Activated CD4-positive, alpha-beta memory T cell treated with anti-CD3 and anti-CD28 coated beads, Interleukin-2, amount 10 ng/mL, durations not matched to agents 7 days and 5 days (primary cell): ENCODE measurements at regions of chr7 and their contacts with region 1.

Region 1: GRCh38 chr7:23055582-23056178 is 41.8 kb upstream of the HYCC1 start:
- DNase-seq: peak; percentile 67
- H3K4me3 Mint-ChIP-seq: no peak overlapping the region
- H3K27ac Mint-ChIP-seq: no peak overlapping the region
- H3K4me1 Mint-ChIP-seq: peaks cover 14% of the 10 kb centered on the region
- H3K27me3 Mint-ChIP-seq: no peaks in the 10 kb centered on the region

Region 2: GRCh38 chr7:22726345-22727185 is 329.1 kb before region 1 on chr7:
- CTCF ChIA-PET with region 1: interaction called, 18 read pairs
- POLR2A ChIA-PET with region 1: no interaction called
- DNase-seq: peak; percentile 70
- H3K4me3 Mint-ChIP-seq: peak overlapping the region; percentile 61
- H3K27ac Mint-ChIP-seq: peak overlapping the region; percentile 66
- H3K4me1 Mint-ChIP-seq: peaks cover 44% of the 10 kb centered on the region
- H3K27me3 Mint-ChIP-seq: peaks cover 30% of the 10 kb centered on the region

Region 3: GRCh38 chr7:22854158-22855048 is 201.3 kb before region 1 on chr7:
- CTCF ChIA-PET with region 1: interaction called, 21 read pairs
- POLR2A ChIA-PET with region 1: no interaction called
- DNase-seq: peak; percentile 80
- H3K4me3 Mint-ChIP-seq: peak overlapping the region; percentile 92
- H3K27ac Mint-ChIP-seq: peak overlapping the region; percentile 86
- H3K4me1 Mint-ChIP-seq: peaks cover 38% of the 10 kb centered on the region
- H3K27me3 Mint-ChIP-seq: peaks cover 3% of the 10 kb centered on the region

Region 4: GRCh38 chr7:22944022-22944421 is 111.7 kb before region 1 on chr7:
- CTCF ChIA-PET with region 1: interaction called, 12 read pairs
- POLR2A ChIA-PET with region 1: interaction called, 3 read pairs
- DNase-seq: no peak
- H3K4me3 Mint-ChIP-seq: no peak overlapping the region
- H3K27ac Mint-ChIP-seq: no peak overlapping the region
- H3K4me1 Mint-ChIP-seq: no peaks in the 10 kb centered on the region
- H3K27me3 Mint-ChIP-seq: no peaks in the 10 kb centered on the region

Region 5: DNA sequence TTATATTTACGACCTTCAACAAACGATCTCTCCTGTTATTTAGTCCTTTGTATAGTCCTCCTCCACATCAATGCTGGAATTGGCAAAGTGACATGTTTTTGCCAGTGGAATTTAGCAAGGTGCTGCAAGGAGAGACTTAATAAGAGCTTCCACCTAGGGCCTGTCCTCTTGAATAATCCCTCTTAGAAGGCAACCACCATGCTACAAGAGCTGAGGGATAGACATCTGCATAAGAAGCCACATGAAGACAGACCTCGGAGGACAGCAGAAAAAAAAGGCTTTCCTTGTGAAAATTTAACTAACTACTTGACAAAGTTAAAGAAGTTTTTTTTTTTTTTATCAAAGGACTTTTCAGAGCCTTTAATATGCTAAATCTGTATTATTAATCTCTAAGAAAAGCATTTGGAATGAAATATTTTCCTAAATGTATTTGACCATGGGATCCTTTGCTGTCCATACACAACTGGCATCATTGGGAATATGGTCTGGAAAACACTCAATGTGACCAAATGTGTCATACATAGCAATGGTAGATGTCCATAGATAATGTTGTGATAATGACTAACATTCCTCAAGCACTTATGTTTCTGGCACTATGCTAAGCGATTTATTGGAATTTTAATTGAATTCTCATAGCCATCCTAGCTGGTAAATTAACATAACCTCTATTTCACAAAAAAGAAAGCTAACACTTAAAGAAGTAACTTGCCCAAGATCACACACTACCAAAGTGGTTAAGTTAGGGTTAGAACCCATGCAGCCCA is 54.9 kb before region 1 on chr7:
- CTCF ChIA-PET with region 1: interaction called, 34 read pairs
- POLR2A ChIA-PET with region 1: interaction called, 4 read pairs
- DNase-seq: no peak
- H3K4me3 Mint-ChIP-seq: no peak overlapping the region
- H3K27ac Mint-ChIP-seq: peak overlapping the region; percentile 74
- H3K4me1 Mint-ChIP-seq: peaks cover 63% of the 10 kb centered on the region
- H3K27me3 Mint-ChIP-seq: no peaks in the 10 kb centered on the region

Region 6: GRCh38 chr7:23020742-23021401 is 34.8 kb before region 1 on chr7:
- CTCF ChIA-PET with region 1: interaction called, 14 read pairs
- POLR2A ChIA-PET with region 1: interaction called, 8 read pairs
- DNase-seq: peak; percentile 36
- H3K4me3 Mint-ChIP-seq: no peak overlapping the region
- H3K27ac Mint-ChIP-seq: peak overlapping the region; percentile 87
- H3K4me1 Mint-ChIP-seq: peaks cover 61% of the 10 kb centered on the region
- H3K27me3 Mint-ChIP-seq: peaks cover 13% of the 10 kb centered on the region

Region 7: DNA sequence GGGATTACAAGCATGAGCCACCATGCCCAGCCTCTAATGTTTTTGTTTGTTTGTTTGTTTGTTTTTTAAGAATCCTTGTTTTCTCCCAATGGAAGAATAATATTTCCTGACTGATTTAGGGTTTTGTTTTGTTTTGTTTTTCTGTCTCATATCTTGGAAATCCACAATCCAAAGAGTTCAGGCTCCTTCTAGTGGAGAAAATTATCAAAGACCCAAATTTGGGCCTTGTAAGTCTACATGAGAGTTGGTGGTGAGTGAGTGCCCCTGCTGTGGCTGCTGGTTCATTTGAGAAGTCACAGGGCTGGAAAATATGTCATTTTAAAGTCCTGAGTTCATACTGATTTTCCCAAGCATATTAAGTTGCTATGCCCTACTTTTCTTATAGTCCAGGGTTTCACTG is 16.4 kb after region 1 on chr7:
- CTCF ChIA-PET with region 1: no interaction called
- POLR2A ChIA-PET with region 1: no interaction called
- DNase-seq: no peak
- H3K4me3 Mint-ChIP-seq: no peak overlapping the region
- H3K27ac Mint-ChIP-seq: no peak overlapping the region
- H3K4me1 Mint-ChIP-seq: no peaks in the 10 kb centered on the region
- H3K27me3 Mint-ChIP-seq: peaks cover 25% of the 10 kb centered on the region